Activated CD4-positive, alpha-beta T cell treated with anti-CD3 and anti-CD28 coated beads, Interleukin-2, amount 10 ng/mL, durations not matched to agents 24 days and 14 days (primary cell): ENCODE measurements at regions of chr1 and their contacts with region 1.

Region 1: GRCh38 chr1:65812065-65812464 is 19.4 kb downstream of the PDE4B start:
- DNase-seq: peak; percentile 91
- H3K4me3 Mint-ChIP-seq: peak overlapping the region; percentile 4
- H3K27ac Mint-ChIP-seq: peak overlapping the region; percentile 76
- H3K4me1 Mint-ChIP-seq: peaks cover 21% of the 10 kb centered on the region
- H3K27me3 Mint-ChIP-seq: peaks cover 15% of the 10 kb centered on the region

Region 2: GRCh38 chr1:64553281-64553680 is 1258.8 kb before region 1 on chr1:
- intact Hi-C with region 1: no loop called
- DNase-seq: no peak
- H3K4me3 Mint-ChIP-seq: no peak overlapping the region
- H3K27ac Mint-ChIP-seq: no peak overlapping the region
- H3K4me1 Mint-ChIP-seq: peaks cover 15% of the 10 kb centered on the region
- H3K27me3 Mint-ChIP-seq: peaks cover 41% of the 10 kb centered on the region

Region 3: DNA sequence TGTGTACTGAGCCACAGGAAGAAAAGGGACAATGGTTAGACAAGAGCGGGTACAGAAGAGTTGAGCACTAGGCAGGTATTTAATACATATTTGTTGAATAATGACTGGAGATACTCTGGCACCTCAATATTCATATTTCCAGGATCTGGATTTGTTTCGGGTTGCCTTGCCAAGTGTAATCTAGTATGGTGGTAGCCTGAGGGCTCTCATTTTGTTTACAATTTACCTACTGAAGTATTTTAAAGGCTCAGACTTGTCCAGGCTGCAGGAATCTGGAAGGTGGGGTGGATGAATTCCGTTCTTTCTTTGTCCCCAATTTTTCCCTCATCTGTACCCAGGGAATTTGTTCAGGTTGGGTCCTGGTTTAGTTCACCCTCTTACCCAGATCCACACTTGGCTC is 1247.2 kb before region 1 on chr1:
- intact Hi-C with region 1: no loop called
- DNase-seq: no peak
- H3K4me3 Mint-ChIP-seq: no peak overlapping the region
- H3K27ac Mint-ChIP-seq: no peak overlapping the region
- H3K4me1 Mint-ChIP-seq: no peaks in the 10 kb centered on the region
- H3K27me3 Mint-ChIP-seq: peaks cover 20% of the 10 kb centered on the region

Region 4: GRCh38 chr1:65067491-65068201 is 744.4 kb before region 1 on chr1:
- intact Hi-C with region 1: loop called (anchors 10 kb)
- DNase-seq: peak; percentile 84
- H3K4me3 Mint-ChIP-seq: peak overlapping the region; percentile 85
- H3K27ac Mint-ChIP-seq: peak overlapping the region; percentile 97
- H3K4me1 Mint-ChIP-seq: peaks cover 33% of the 10 kb centered on the region
- H3K27me3 Mint-ChIP-seq: no peaks in the 10 kb centered on the region

Region 5: GRCh38 chr1:65419681-65420589 is 392.1 kb before region 1 on chr1:
- intact Hi-C with region 1: loop called (anchors 1 kb)
- DNase-seq: peak; percentile 100
- H3K4me3 Mint-ChIP-seq: no peak overlapping the region
- H3K27ac Mint-ChIP-seq: peak overlapping the region; percentile 93
- H3K4me1 Mint-ChIP-seq: peaks cover 28% of the 10 kb centered on the region
- H3K27me3 Mint-ChIP-seq: peaks cover 7% of the 10 kb centered on the region

Region 6: GRCh38 chr1:66182551-66183178 is 370.6 kb after region 1 on chr1:
- intact Hi-C with region 1: loop called (anchors 2 kb)
- DNase-seq: peak; percentile 84
- H3K4me3 Mint-ChIP-seq: peak overlapping the region; percentile 52
- H3K27ac Mint-ChIP-seq: peak overlapping the region; percentile 52
- H3K4me1 Mint-ChIP-seq: peaks cover 29% of the 10 kb centered on the region
- H3K27me3 Mint-ChIP-seq: peaks cover 1% of the 10 kb centered on the region

Region 7: DNA sequence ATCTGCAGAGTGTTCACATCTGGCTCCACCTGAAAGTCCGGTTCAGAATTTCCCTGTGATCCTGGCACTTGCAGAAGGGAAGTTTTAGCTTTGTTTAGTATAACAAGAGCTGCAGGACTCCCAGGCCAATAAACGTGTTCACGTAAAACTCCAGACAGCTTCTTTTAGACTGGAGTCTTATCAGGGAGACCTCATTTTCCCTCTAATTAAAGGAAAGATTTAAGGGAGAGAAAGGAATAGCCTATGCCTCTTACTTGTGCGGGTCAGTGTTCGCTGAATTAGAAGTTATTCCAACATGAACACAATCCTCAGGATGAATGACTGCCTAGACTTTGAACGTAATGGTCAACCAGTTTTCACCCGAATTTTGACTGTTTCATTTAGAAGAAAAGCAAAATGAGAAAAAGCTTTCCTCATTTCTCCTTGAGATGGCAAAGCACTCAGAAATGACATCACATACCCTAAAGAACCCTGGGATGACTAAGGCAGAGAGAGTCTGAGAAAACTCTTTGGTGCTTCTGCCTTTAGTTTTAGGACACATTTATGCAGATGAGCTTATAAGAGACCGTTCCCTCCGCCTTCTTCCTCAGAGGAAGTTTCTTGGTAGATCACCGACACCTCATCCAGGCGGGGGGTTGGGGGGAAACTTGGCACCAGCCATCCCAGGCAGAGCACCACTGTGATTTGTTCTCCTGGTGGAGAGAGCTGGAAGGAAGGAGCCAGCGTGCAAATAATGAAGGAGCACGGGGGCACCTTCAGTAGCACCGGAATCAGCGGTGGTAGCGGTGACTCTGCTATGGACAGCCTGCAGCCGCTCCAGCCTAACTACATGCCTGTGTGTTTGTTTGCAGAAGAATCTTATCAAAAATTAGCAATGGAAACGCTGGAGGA is 519.8 kb after region 1 on chr1:
- intact Hi-C with region 1: loop called (anchors 5 kb)
- DNase-seq: peak; percentile 82
- H3K4me3 Mint-ChIP-seq: peak overlapping the region; percentile 98
- H3K27ac Mint-ChIP-seq: peak overlapping the region; percentile 97
- H3K4me1 Mint-ChIP-seq: peaks cover 56% of the 10 kb centered on the region
- H3K27me3 Mint-ChIP-seq: no peaks in the 10 kb centered on the region